Dendritic cell treated with granulocyte-macrophage colony-stimulating factor and Interleukin-4, amounts not matched to agents 40 ng/mL and 50 ng/mL, for 4 days (primary cell): ENCODE measurements at regions of chr12 and their contacts with region 1.

Region 1: DNA sequence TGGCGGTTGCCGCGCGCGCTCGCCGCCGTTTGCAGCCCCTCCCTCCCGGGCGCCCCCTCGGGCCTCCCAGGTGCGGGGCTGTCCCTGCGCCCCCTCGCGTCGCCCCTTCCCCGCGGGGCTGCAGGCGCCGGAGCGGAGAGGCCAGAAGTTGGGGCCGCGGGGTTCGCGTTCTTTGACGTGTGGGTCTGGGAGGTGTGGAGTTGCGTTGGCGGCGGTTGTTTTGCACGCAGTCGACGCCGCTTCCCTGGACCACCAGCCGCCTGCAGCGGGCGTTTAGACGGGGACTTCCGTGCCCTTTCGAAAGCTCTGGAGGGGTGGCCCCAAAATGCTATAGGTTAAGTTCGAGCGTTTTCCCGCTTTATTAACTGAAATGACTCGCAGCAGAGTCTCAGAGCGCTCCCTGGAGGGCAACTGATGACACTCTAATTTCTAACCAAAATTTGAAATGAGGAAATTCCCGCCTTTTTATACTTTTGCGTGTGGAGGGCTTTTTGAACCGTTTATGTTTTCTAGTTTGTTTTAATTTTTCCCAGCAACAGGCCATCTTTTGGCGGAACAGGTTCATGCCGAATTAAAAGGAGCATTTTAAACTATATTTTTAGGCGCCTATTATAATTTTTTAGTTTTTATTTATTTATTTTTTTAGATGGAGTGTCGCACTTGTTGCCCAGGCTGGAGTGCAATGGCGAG is 939 bp downstream of the TMPO start:
- H3K4me3 Mint-ChIP-seq: peak overlapping the region; percentile 92
- H3K27ac Mint-ChIP-seq: peak overlapping the region; percentile 98
- H3K4me1 Mint-ChIP-seq: peaks cover 33% of the 10 kb centered on the region
- H3K27me3 Mint-ChIP-seq: no peaks in the 10 kb centered on the region

Region 2: GRCh38 chr12:98424726-98425401 is 91.5 kb before region 1 on chr12:
- intact Hi-C with region 1: loop called (anchors 1 kb)
- H3K4me3 Mint-ChIP-seq: no peak overlapping the region
- H3K27ac Mint-ChIP-seq: no peak overlapping the region
- H3K4me1 Mint-ChIP-seq: peaks cover 8% of the 10 kb centered on the region
- H3K27me3 Mint-ChIP-seq: no peaks in the 10 kb centered on the region

Region 3: DNA sequence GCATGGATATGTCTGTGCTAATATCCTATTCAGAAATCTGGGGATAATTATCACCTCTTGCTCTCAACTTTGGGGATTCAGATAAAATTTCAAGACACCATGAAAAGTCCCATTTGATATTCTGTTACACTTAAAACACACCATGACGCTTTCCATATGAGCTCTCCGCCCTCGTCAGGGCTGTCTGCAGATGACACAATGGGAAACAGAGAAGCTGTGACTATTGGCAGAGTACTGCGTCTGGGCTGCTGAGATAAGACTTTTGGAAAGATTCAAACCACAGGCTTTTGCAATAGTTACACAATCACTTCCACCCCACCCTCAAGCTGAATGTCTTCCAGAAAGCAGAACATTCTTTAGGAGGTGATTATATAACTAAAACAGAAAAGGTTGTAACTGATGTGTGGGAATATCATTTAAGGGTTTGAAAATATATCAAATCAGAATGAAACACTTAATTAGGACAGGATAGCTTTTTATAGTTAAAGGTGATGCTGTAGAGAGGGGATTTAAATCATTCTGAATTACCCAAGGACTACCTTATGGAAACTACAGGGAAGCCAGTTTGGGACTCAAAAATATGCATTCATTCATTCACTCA is 76.2 kb before region 1 on chr12:
- intact Hi-C with region 1: loop called (anchors 1 kb)
- H3K4me3 Mint-ChIP-seq: peak overlapping the region; percentile 55
- H3K27ac Mint-ChIP-seq: peak overlapping the region; percentile 92
- H3K4me1 Mint-ChIP-seq: peaks cover 50% of the 10 kb centered on the region
- H3K27me3 Mint-ChIP-seq: peaks cover 1% of the 10 kb centered on the region

Region 4: DNA sequence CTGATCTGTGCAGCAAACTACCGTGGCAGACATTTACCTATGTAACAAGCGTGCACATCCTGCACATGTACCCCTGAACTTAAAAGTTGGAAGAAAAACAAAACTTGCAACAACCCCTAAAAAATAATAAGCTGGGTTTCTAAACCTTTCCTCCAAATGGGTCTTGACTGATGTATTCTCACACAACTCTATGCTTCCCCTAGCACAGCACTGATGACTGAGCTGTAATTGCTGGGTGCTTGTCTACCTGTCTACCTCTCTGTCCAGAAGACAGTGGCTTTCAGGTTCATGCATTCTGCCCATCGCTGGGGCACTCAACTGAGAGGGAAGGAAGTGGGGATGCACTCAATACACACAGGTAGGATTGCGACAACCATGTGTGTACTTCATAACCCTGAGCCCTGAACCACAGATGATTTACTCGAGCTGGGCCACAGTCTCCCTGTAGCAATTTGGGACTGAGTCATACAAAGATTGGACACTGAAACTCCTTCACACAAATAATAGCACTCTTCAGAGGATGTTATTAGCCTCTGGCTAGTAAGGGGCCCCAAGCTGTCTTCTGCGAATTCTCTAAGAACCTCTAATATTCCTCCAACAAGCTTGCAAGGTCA is 45.8 kb before region 1 on chr12:
- intact Hi-C with region 1: no loop called
- H3K4me3 Mint-ChIP-seq: no peak overlapping the region
- H3K27ac Mint-ChIP-seq: no peak overlapping the region
- H3K4me1 Mint-ChIP-seq: peaks cover 29% of the 10 kb centered on the region
- H3K27me3 Mint-ChIP-seq: no peaks in the 10 kb centered on the region

Region 5: DNA sequence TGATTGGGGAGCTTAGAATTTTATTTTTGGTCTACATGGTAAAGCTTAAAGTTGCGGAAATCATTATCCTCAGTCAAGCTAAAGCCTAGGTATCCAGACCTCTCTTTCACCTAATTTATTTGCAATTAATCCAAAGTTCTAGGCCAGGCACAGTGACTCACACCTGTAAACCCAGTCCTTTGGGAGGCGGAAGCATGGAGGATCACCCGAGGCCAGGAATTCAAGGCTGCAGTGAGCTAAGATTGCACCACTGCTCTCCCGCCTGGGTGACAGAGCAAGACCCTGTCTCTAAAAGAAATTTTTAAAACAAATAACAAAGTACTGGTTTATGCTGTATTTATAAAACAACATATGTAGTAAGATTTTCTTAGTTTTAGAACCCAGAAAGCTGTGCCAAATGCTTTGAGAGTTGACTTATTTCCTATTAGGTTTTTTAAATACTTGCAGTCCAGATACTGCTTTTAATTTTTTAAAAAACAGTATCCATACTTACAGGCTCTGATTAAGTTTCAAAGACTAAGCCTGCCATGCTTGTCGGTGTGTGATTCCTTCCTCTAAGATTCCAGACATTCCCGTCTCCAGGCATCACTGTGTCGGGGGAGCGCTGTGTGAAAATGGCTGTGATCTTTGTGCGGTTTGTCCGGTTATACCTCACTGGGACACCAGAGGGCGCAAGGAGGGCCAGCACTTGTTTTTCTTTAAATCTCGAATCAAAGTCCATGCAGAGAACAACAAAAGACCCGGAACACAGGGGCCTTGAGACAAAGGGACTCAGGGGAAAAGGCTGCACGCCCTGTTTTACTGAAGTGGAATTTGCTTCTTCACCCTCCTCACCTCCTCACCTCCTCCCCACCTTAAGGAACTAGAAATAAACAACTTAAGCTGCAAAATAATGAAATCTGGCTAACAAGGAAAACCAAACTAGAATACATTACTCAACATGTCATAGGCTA is 25.6 kb before region 1 on chr12:
- intact Hi-C with region 1: loop called (anchors 1 kb)
- H3K4me3 Mint-ChIP-seq: peak overlapping the region; percentile 23
- H3K27ac Mint-ChIP-seq: peak overlapping the region; percentile 83
- H3K4me1 Mint-ChIP-seq: peaks cover 5% of the 10 kb centered on the region
- H3K27me3 Mint-ChIP-seq: no peaks in the 10 kb centered on the region

Region 6: GRCh38 chr12:98503592-98504367 is 12.5 kb before region 1 on chr12:
- intact Hi-C with region 1: loop called (anchors 1 kb)
- H3K4me3 Mint-ChIP-seq: peak overlapping the region; percentile 89
- H3K27ac Mint-ChIP-seq: peak overlapping the region; percentile 94
- H3K4me1 Mint-ChIP-seq: peaks cover 12% of the 10 kb centered on the region
- H3K27me3 Mint-ChIP-seq: no peaks in the 10 kb centered on the region

Region 7: DNA sequence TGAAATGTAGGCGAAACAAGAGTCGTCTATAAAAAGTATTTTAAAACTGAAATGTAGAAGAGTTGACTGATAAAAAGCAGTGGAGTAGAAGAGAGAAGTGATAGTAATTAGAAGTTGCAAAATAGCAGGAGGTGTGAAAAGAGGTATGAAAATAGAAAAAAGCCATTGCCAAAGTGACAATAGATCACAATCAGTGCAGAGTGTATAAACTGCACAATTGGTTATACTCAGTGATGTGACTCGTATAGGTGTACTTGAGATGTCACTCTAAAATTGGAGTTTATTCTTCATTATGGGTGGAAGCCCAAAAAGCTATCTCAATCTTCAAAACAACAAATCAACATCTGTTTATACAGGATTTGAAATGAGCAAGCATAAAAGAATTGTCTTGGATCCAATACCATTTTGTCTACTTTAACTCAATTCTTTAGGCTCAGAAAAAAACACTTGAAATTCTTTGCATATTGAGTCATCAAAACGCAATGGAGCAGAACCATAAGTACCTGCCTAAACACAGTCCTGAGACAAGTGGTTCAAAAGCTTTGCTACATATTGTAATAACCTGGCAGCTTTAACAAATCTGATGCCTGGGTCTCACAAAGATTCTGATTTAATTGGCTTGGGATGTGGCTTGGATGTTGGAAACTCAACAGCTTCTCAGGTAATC is 119.5 kb after region 1 on chr12:
- intact Hi-C with region 1: no loop called
- H3K4me3 Mint-ChIP-seq: no peak overlapping the region
- H3K27ac Mint-ChIP-seq: no peak overlapping the region
- H3K4me1 Mint-ChIP-seq: peaks cover 27% of the 10 kb centered on the region
- H3K27me3 Mint-ChIP-seq: no peaks in the 10 kb centered on the region

Region 8: GRCh38 chr12:98719515-98720504 is 203.5 kb after region 1 on chr12:
- intact Hi-C with region 1: no loop called
- H3K4me3 Mint-ChIP-seq: no peak overlapping the region
- H3K27ac Mint-ChIP-seq: no peak overlapping the region
- H3K4me1 Mint-ChIP-seq: peaks cover 12% of the 10 kb centered on the region
- H3K27me3 Mint-ChIP-seq: no peaks in the 10 kb centered on the region